ENCODE measurements at regions of chr19 and their contacts with region 1.

Region 1: GRCh38 chr19:13796301-13797057 is 1.2 kb downstream of the ZSWIM4 start:
- DNase-seq: no peak
- ATAC-seq: peak; percentile 66
- H3K4me3 ChIP-seq: peak overlapping the region; percentile 68 to 74
- H3K27ac ChIP-seq: peak overlapping the region; percentile 83
- H3K4me1 ChIP-seq: peaks cover 17% of the 10 kb centered on the region
- H3K27me3 ChIP-seq: no peaks in the 10 kb centered on the region
- CTCF ChIP-seq: no peak

Region 2: DNA sequence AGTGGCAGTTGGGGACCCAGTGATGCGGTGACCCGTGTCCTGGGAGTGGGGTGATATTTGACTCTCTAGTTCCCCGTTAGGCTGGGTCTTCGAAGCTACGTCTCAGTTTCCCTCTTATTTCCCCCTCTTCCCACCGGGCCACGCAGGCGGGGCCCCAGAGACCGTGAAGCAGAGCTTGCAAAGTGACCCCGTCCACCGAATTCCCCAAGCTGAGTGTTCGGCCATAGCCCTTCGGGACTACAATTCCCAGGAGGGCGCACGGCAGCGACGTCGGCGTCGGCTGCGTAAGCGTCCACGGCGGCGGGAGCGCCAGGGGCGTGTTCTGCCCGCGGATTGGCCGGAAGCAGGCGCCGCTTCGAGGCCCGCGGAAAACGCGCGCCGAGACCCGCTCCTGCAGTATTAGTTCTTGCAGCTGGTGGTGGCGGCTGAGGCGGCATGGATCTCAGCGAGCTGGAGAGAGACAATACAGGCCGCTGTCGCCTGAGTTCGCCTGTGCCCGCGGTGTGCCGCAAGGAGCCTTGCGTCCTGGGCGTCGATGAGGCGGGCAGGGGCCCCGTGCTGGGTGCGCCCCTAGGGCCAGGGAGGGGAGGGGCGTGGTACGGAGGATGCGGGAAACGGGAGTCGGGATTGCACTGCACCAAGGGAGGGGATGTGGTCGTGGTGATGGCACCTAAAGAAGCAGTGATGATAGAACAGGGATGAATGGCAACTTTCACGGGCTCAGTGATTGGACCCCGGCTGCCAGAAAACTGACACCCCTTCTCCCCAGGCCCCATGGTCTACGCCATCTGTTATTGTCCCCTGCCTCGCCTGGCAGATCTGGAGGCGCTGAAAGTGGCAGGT is 990.0 kb before region 1 on chr19 and contains the start of gene RNASEH2A:
- CTCF ChIA-PET with region 1: no interaction called
- POLR2A ChIA-PET with region 1: no interaction called
- in situ Hi-C with region 1: no loop called
- intact Hi-C with region 1: no loop called
- DNase-seq: no peak
- ATAC-seq: peak; percentile 98
- H3K4me3 ChIP-seq: peak within 1 kb of the TSS; percentile 75 to 80
- H3K27ac ChIP-seq: peak within 1 kb of the TSS; percentile 79
- H3K4me1 ChIP-seq: peaks cover 8% of the 10 kb centered on the region
- H3K27me3 ChIP-seq: no peaks in the 10 kb centered on the region
- CTCF ChIP-seq: no peak
- total RNA-seq, gene RNASEH2A: 44.9 TPM

Region 3: GRCh38 chr19:12867120-12868099 is 929.1 kb before region 1 on chr19:
- CTCF ChIA-PET with region 1: no interaction called
- POLR2A ChIA-PET with region 1: interaction called, 19 read pairs
- in situ Hi-C with region 1: no loop called
- intact Hi-C with region 1: no loop called
- DNase-seq: no peak
- ATAC-seq: 0 out of 2 replicates have a peak, but pooled peaks have one; percentile 22
- H3K4me3 ChIP-seq: no peak overlapping the region
- H3K27ac ChIP-seq: no peak overlapping the region
- H3K4me1 ChIP-seq: no peaks in the 10 kb centered on the region
- H3K27me3 ChIP-seq: no peaks in the 10 kb centered on the region
- CTCF ChIP-seq: no peak

Region 4: DNA sequence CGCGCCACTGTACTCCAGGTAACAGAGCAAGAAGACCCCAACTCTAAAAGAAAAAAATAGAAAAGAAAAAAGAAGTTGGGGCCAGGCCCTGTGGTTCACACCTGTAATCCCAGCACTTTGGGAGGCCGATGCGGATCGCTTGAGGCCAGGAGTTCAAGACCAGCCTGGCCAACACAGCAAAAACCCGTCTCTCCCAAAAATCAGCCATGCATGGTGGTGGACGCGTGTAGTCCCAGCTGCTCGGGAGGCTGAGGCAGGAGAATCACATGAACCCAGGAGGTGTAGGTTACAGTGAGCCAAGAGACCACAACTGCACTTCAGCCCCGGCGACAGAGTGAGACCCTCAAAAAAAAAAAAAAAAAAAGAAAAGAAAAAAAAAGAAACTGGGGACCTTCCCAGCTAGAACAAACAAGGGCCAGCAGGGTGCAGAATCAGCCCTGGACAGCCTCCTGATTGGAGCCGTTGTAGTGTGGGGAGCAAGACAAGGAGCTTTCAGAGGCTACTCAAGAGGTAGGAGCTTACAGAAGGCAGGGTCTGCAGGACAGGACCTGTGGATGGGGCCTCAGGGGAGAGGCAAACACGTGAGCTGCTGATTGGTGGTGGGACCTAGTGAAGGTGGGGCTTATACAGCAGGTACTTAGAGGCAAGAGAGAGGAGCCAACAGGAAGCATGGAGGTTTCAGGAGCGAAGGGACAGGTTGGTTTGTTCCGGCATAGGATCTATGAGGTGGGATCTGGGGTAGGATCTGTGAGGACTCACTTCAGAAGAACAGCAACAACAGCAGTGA is 31.0 kb after region 1 on chr19:
- CTCF ChIA-PET with region 1: no interaction called
- POLR2A ChIA-PET with region 1: interaction called, 14 read pairs
- in situ Hi-C with region 1: no loop called
- intact Hi-C with region 1: no loop called
- DNase-seq: no peak
- ATAC-seq: no peak
- H3K4me3 ChIP-seq: no peak overlapping the region
- H3K27ac ChIP-seq: no peak overlapping the region
- H3K4me1 ChIP-seq: peaks cover 3% of the 10 kb centered on the region; the same call in 1 of the 2 replicates
- H3K27me3 ChIP-seq: no peaks in the 10 kb centered on the region
- CTCF ChIP-seq: no peak

Measured in Panc1 (cell line).